ENCODE measurements at regions of chr17 and their contacts with region 1.

Region 1: GRCh38 chr17:75313941-75314551 is 24.8 kb upstream of the SLC25A19 start:
- DNase-seq: no peak
- H3K4me3 Mint-ChIP-seq: peak overlapping the region; percentile 28
- H3K27ac Mint-ChIP-seq: peak overlapping the region; percentile 78
- H3K4me1 Mint-ChIP-seq: peaks cover 19% of the 10 kb centered on the region
- H3K27me3 Mint-ChIP-seq: no peaks in the 10 kb centered on the region

Region 2: DNA sequence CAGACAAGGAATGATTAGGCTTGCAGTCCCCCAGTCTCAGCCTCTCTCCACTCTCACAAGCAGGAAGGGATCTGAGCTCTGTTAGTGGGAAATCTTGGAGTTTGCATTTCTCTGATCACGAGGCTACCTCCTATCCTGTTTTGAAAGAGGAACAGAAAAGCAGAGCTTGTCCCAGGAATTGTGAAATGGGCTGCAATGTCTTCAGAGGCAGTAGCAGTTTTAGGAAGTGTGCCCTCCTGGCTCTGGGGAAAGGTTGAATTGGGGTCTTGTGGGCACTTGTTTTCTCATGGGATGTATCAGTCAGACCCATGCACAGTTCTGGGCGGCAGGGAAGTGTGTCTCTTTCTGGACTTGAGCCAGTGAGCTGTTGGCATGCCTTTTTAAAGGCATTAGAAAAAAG is 85.7 kb before region 1 on chr17:
- intact Hi-C with region 1: no loop called
- DNase-seq: no peak
- H3K4me3 Mint-ChIP-seq: no peak overlapping the region
- H3K27ac Mint-ChIP-seq: no peak overlapping the region
- H3K4me1 Mint-ChIP-seq: no peaks in the 10 kb centered on the region
- H3K27me3 Mint-ChIP-seq: no peaks in the 10 kb centered on the region

Region 3: DNA sequence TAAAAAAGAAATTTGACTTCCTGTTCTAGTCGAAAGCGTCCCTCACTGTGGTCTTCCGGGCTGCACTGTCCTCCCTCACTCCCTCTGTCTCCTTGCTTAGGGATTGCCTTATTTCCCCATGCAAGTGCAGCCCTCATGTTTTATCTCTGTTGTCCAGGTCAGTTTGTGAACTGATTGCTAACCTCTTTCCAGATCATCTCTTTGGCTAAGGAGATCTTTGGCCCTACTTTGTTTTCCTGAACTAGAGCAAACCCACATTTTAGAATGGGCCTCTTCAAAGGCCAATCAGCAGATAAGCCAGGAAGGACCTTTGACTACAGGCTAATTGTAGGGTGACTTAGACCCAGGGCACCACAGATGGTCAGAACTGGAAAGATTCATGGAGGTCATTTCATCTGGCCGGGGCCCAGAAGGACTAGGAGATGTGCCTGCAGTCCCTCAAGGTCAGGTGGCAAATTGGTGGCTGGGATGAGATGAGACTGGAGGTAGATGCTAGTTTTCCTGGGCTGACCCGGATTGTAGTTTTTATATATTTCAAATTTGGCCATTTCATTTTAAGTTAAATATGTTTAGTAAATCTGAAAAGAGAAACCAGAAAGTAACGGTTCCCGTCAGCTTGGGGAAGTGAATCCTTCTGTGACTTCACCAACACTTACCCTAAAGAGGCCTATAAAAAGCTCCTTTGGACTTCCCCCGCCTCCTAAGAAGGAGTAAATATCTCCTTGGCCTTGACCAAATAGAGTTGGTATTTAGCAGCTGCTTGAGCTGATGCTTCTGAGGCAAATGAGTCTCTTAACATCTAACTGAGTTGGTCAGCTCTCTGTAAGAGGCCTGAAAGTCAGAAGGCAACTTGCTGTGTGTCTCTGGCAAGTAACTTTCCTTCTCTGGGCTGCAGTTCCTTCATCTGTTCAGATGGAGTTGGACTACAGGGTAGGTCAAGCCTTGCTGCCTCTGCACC is 18.6 kb before region 1 on chr17:
- intact Hi-C with region 1: loop called (anchors 2 kb)
- DNase-seq: peak; percentile 81
- H3K4me3 Mint-ChIP-seq: peak overlapping the region; percentile 34
- H3K27ac Mint-ChIP-seq: peak overlapping the region; percentile 86
- H3K4me1 Mint-ChIP-seq: peaks cover 23% of the 10 kb centered on the region
- H3K27me3 Mint-ChIP-seq: no peaks in the 10 kb centered on the region

Measured in activated CD4-positive, alpha-beta T cell treated with anti-CD3 and anti-CD28 coated beads, Interleukin-2, amount 10 ng/mL, durations not matched to agents 24 days and 14 days (primary cell).